Activated CD4-positive, alpha-beta T cell treated with anti-CD3 and anti-CD28 coated beads for 36 hours (primary cell): ENCODE measurements at regions of chr11 and their contacts with region 1.

Region 1: DNA sequence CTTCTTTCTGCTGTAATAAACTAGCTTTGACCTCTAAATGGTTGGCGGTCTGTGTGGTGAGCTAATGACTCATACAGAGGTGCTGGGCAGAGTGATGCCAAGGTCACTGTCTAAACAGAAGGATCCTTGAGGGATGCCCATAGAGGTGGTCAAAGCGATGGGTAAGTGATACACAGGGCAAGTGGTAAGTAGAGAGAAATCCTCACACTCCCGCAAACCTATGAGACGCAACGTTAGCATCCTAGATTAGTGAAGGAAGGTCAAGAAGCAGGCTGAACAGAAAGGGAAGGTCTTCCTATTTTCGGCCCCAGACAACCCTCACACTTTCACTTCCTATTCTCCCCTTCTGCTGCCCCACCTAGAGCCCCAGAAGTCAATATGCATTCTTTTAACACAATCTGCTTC is 65.6 kb upstream of the SESN3 start:
- DNase-seq: no peak
- ATAC-seq: no peak
- H3K4me3 Mint-ChIP-seq: no peak overlapping the region
- H3K27ac Mint-ChIP-seq: no peak overlapping the region
- H3K4me1 Mint-ChIP-seq: peaks cover 26% of the 10 kb centered on the region
- H3K27me3 Mint-ChIP-seq: no peaks in the 10 kb centered on the region

Region 2: GRCh38 chr11:94968334-94968958 is 328.2 kb before region 1 on chr11:
- CTCF ChIA-PET with region 1: no interaction called
- POLR2A ChIA-PET with region 1: no interaction called
- intact Hi-C with region 1: no loop called
- DNase-seq: no peak
- ATAC-seq: no peak
- H3K4me3 Mint-ChIP-seq: no peak overlapping the region
- H3K27ac Mint-ChIP-seq: no peak overlapping the region
- H3K4me1 Mint-ChIP-seq: peaks cover 17% of the 10 kb centered on the region
- H3K27me3 Mint-ChIP-seq: no peaks in the 10 kb centered on the region

Region 3: GRCh38 chr11:95248666-95249467 is 47.8 kb before region 1 on chr11:
- CTCF ChIA-PET with region 1: no interaction called
- POLR2A ChIA-PET with region 1: no interaction called
- intact Hi-C with region 1: loop called in 1 of 2 experiments (anchors 5 kb)
- DNase-seq: peak; percentile 15
- ATAC-seq: peak; percentile 33
- H3K4me3 Mint-ChIP-seq: no peak overlapping the region
- H3K27ac Mint-ChIP-seq: peak overlapping the region; percentile 56
- H3K4me1 Mint-ChIP-seq: peaks cover 37% of the 10 kb centered on the region
- H3K27me3 Mint-ChIP-seq: no peaks in the 10 kb centered on the region

Region 4: DNA sequence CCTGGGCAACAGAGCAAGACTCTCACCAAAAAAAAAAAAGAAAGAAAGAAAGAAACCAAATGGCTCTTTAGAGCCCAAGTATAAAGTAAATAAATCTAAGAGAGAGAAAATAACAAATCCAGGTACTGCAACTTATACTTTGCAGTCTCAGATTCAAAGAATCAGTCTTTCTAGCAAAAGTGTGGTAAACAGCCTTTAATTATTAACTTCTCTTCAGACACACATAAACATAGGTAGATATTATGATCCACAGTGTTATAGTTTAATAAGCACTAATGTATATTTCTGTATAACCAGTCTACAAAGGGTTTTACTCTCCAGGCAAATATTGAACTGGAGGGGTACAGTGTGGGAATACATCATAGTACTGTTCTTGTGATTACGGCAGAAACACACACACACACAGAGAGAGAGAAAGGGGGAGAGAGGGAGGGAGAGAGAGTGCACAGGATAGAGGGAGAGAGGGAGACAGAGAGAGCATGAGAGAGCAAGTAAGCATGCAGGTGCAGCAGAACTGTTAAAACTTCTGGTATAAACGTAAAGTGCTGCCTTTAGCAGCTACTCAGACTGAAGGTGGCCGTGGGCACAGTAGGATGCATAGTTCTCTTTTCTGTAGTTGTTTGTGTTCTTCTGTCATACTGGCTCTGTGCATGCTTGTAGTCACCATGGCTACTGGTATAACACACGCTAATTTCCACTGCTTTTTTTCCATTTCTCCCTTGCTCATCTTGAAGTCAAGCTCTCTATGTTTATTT is 595.0 kb after region 1 on chr11:
- CTCF ChIA-PET with region 1: no interaction called
- POLR2A ChIA-PET with region 1: no interaction called
- intact Hi-C with region 1: no loop called
- DNase-seq: peak; percentile 7
- ATAC-seq: peak; percentile 51
- H3K4me3 Mint-ChIP-seq: no peak overlapping the region
- H3K27ac Mint-ChIP-seq: no peak overlapping the region
- H3K4me1 Mint-ChIP-seq: peaks cover 8% of the 10 kb centered on the region
- H3K27me3 Mint-ChIP-seq: no peaks in the 10 kb centered on the region